ENCODE measurements at regions of chr14 and their contacts with region 1.

Region 1: GRCh38 chr14:54866588-54866987 is 36.0 kb downstream of the GCH1 start:
- DNase-seq: no peak

Region 2: DNA sequence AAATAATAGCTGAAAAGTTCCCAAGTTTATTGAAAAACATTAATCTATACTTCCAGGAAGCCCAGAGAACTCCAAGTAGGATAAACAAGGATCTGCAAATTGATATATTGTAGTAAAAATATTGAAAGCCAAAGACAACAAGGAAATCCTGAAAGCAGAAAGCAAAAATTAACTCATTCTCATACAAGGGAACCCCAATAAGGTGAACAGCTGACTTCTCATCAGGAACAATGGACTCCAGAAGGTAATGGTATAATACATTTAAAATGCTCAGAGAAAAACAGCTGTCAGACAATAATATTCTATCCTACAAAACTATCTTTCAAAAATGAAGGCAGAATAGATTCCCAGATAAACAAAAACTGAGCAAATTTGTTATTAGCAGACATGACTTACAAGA is 771.8 kb before region 1 on chr14:
- intact Hi-C with region 1: no loop called
- DNase-seq: no peak

Region 3: DNA sequence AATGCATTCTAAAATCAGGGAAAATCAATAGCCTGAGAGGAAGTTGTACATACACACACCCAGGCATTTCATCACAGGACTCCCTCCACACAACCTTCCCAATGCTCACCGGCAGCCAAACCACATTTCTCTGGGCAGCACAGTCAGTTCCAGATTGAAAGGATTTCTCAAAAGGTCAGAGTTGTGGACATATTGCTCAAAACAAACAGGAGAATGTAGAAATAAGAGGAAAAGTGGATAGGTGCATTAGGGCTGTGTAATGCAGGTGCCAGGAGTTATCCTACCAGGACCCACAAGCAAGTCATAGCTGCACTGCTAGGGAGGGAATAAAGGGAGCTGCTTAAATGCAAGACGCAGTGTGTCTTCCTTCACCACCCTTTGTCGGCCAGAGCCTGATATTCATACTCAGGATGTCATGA is 26.9 kb before region 1 on chr14:
- intact Hi-C with region 1: no loop called
- DNase-seq: no peak

Region 4: GRCh38 chr14:54902521-54903420 is 36.2 kb after region 1 on chr14 and contains the start of gene GCH1:
- intact Hi-C with region 1: loop called (anchors 5 kb)
- DNase-seq: peak; percentile 91
- total RNA-seq, gene GCH1: 2.6 TPM

Measured in cardiac septum (tissue), 1 donor.